Activated T-helper 1 cell treated with anti-CD3 and anti-CD28 coated beads, Interleukin-12 subunit alpha, Interleukin-12 subunit beta, Interleukin-2, Interleukin-4 antibody, amounts not matched to agents 30 ng/mL and 10 ng/mL and 1 ng/mL, durations not matched to agents 14 hours and 24 hours and 36 hours (primary cell): ENCODE measurements at regions of chr13 and their contacts with region 1.

Region 1: GRCh38 chr13:51583875-51584730 is at the start of gene WDFY2:
- DNase-seq: peak; percentile 99
- H3K4me3 Mint-ChIP-seq: peak within 1 kb of the TSS; percentile 94
- H3K27ac Mint-ChIP-seq: peak within 1 kb of the TSS; percentile 96
- H3K4me1 Mint-ChIP-seq: peaks cover 42% of the 10 kb centered on the region
- H3K27me3 Mint-ChIP-seq: no peaks in the 10 kb centered on the region
- total RNA-seq, gene WDFY2: 7.5 and 11.4 TPM in 2 replicates

Region 2: GRCh38 chr13:49792550-49793324 is 1791.4 kb before region 1 on chr13 and contains the start of gene KPNA3:
- intact Hi-C with region 1: loop called (anchors 2 kb)
- DNase-seq: peak; percentile 93
- H3K4me3 Mint-ChIP-seq: peak within 1 kb of the TSS; percentile 96
- H3K27ac Mint-ChIP-seq: peak within 1 kb of the TSS; percentile 97
- H3K4me1 Mint-ChIP-seq: peaks cover 30% of the 10 kb centered on the region
- H3K27me3 Mint-ChIP-seq: peaks cover 6% of the 10 kb centered on the region
- total RNA-seq, gene KPNA3: 54.7 and 55.0 TPM in 2 replicates

Region 3: DNA sequence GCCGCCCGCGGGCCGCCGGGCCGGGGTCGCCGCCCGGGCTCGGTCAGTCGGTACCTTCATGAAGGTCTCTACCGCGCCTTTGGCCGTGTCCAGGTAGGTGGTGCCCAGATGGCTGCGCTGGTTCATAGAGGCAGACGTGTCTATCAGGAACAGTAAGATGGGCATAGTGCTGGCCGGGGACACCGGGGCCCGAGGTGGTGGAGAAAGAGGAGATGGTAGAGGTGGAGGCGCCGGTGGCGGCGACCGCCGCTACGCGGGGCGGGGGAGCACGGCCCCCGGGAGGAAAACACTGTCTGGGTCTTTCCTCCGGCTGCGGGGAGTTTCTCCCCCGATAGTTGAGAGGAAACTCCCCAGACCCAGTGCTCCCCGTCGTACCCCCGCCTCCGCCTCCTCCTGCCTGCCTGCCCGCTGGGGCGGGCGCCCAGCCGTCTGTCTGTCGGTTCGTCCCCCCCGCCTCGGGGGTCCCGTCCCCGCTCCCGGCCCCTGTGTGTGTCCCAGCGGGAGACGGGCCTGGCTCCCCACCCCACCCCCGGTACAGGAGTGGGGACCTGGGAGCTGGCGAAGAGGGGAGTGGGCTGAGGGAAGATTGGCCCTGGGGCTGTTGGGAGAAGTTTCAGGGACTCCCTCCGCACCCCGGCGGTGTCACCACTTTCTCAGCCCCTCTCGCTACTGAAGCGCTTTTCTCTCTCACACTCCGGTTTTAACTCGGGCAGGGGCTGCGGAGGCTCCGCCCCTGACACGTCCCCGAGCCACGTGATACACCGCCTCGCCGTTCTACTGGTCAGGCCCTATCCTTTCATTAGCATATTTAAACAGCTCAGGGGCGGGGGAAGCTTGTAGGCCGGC is 131.5 kb before region 1 on chr13 and contains the start of gene INTS6:
- intact Hi-C with region 1: loop called (anchors 1 kb)
- DNase-seq: peak; percentile 99
- H3K4me3 Mint-ChIP-seq: peak within 1 kb of the TSS; percentile 92
- H3K27ac Mint-ChIP-seq: peak within 1 kb of the TSS; percentile 98
- H3K4me1 Mint-ChIP-seq: peaks cover 52% of the 10 kb centered on the region
- H3K27me3 Mint-ChIP-seq: no peaks in the 10 kb centered on the region
- total RNA-seq, gene INTS6: 76.6 and 81.7 TPM in 2 replicates

Region 4: DNA sequence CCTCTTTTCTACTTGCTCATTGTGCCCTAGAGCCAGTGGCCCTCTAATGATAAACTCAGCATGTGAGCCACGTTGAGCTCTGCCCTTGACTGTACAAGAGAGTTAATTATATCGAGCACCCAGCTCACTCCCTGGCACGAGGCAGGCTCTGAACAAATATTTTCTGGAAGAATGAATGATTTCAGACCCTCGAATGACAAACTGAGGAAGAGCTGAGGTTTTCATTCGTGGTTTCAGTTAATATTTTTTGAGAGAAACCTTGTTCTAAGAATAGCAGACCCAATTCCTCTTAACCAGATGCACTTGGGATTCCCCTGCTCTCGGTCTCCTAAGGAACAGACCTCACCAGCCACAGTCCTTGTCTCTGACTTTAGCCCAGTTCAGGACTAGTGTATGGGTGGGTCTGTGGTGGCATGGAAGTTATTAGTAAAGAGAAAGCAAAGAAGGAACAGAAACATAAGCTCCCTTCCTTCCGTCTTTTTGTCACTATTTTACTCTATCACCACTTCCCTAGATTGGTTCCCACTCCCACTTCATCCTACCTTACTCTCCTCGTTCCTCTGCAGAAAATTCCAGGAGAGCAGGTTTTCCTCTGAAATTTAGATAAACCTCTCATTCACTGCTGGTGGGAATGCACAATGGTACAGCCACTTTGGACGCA is 22.0 kb before region 1 on chr13:
- intact Hi-C with region 1: no loop called
- DNase-seq: no peak
- H3K4me3 Mint-ChIP-seq: peak overlapping the region; percentile 8
- H3K27ac Mint-ChIP-seq: no peak overlapping the region
- H3K4me1 Mint-ChIP-seq: peaks cover 46% of the 10 kb centered on the region
- H3K27me3 Mint-ChIP-seq: no peaks in the 10 kb centered on the region

Region 5: GRCh38 chr13:51614350-51614786 is 30.3 kb after region 1 on chr13:
- intact Hi-C with region 1: loop called (anchors 1 kb)
- DNase-seq: peak; percentile 30
- H3K4me3 Mint-ChIP-seq: peak overlapping the region; percentile 86
- H3K27ac Mint-ChIP-seq: peak overlapping the region; percentile 97
- H3K4me1 Mint-ChIP-seq: peaks cover 18% of the 10 kb centered on the region
- H3K27me3 Mint-ChIP-seq: peaks cover 2% of the 10 kb centered on the region

Region 6: DNA sequence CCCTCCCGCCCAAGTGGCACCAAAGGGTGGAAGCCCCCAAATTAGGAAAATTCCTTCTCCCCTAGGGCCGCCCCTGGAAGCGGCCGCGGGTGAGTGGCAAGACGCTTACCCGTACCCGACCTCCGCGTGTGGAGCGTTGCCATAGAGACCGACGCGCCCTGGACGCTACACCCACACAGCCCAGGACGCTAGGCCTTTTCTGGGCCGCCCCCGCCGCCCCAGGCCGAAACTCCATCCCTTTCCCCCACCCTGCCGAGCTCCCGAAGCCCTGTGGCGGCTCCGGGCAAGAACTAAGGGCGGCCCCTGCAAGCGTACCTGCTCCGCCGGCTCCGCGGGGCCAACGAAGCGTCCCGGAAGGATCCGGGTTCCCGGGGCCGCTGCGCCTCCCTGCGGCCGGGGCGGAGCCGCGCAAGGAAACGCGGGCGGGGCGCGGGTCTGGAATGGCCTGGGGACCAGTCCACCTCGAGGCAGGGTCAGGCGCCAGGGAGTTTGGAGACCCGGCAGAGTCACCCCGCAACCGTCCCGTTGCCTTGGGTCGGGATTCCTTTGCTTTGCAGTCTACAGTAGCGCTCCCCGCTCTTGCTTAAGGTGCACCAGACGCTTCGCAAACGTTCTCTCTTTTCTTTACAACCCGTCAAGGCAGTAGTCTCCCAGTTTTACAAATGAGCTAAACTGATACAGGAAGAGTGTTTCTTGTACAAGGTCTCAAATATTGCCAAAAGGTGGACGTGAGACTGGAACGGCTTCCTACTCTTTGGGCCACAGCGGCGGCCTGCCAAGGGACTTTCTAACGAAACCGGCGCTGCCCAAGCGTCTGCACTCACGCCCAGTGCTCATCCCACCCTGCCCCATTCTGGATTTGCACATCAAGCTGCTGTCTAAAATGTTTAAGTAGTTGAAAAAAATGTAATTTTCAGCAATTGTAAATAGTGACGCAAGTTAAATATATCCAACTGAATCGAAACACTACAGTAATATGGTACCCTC is 544.9 kb after region 1 on chr13 and contains the start of gene NEK5:
- intact Hi-C with region 1: loop called (anchors 5 kb)
- DNase-seq: peak; percentile 52
- H3K4me3 Mint-ChIP-seq: peak within 1 kb of the TSS; percentile 77
- H3K27ac Mint-ChIP-seq: no peak within 1 kb of the TSS
- H3K4me1 Mint-ChIP-seq: peaks cover 14% of the 10 kb centered on the region
- H3K27me3 Mint-ChIP-seq: peaks cover 8% of the 10 kb centered on the region
- total RNA-seq, gene NEK5: not detected in 2 replicates

Region 7: GRCh38 chr13:52652196-52652979 is 1068.3 kb after region 1 on chr13 and contains the start of gene SUGT1:
- intact Hi-C with region 1: loop called (anchors 1 kb)
- DNase-seq: peak; percentile 93
- H3K4me3 Mint-ChIP-seq: no peak within 1 kb of the TSS
- H3K27ac Mint-ChIP-seq: no peak within 1 kb of the TSS
- H3K4me1 Mint-ChIP-seq: peaks cover 15% of the 10 kb centered on the region
- H3K27me3 Mint-ChIP-seq: no peaks in the 10 kb centered on the region
- total RNA-seq, gene SUGT1: 63.3 and 66.1 TPM in 2 replicates